GM10248 (cell line): ENCODE measurements at regions of chr12 and their contacts with region 1.

Region 1: GRCh38 chr12:26884765-26885576 is 52.0 kb upstream of the ITPR2 start:
- DNase-seq: peak; percentile 81
- CTCF ChIP-seq: peak; percentile 88

Region 2: GRCh38 chr12:26576266-26576665 is 308.7 kb before region 1 on chr12:
- CTCF ChIA-PET with region 1: no interaction called
- POLR2A ChIA-PET with region 1: no interaction called
- DNase-seq: no peak
- CTCF ChIP-seq: no peak

Region 3: GRCh38 chr12:26832822-26833742 is 51.9 kb before region 1 on chr12 and contains the start of gene ITPR2:
- CTCF ChIA-PET with region 1: interaction called, 42 read pairs
- POLR2A ChIA-PET with region 1: interaction called, 4 read pairs
- DNase-seq: peak; percentile 99
- CTCF ChIP-seq: peak; percentile 66

Region 4: DNA sequence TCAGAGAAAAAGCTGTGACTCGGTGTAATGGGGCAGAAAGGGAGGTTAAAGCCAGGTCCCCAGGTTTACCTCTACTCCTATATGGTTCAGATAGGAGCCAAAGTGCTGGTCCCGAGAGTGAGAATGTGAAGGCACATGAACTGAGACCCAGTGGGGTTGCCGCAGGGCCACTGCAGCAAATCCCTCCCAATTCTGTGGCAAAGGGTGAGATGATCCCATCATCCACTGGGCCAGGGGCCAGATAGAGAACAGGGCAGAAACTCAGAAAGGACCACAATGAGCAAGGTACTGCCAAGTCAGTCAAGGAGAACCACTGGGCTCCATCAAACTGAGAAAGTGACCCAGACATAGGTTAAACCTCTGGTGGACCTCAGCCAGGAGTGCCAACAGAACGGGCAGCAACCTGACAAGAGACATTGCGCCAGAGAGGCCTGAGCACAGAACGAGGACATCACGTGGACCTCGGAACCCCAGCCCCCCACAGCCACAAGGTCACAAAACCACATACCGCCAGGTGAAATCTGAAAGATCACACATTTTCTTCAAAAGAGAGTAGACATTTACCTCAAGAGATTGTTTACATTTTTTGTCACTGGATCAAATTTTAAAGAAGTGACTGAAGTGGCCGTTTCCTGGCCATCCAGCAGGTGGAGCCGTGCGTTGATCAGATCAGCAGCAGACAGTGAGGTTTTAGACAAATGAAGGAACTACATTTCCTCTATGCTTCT is 31.5 kb before region 1 on chr12:
- CTCF ChIA-PET with region 1: interaction called, 81 read pairs
- POLR2A ChIA-PET with region 1: no interaction called
- DNase-seq: peak; percentile 75
- CTCF ChIP-seq: peak; percentile 88

Region 5: GRCh38 chr12:26870491-26871419 is 14.2 kb before region 1 on chr12:
- CTCF ChIA-PET with region 1: interaction called, 71 read pairs
- POLR2A ChIA-PET with region 1: no interaction called
- DNase-seq: no peak
- CTCF ChIP-seq: no peak

Region 6: DNA sequence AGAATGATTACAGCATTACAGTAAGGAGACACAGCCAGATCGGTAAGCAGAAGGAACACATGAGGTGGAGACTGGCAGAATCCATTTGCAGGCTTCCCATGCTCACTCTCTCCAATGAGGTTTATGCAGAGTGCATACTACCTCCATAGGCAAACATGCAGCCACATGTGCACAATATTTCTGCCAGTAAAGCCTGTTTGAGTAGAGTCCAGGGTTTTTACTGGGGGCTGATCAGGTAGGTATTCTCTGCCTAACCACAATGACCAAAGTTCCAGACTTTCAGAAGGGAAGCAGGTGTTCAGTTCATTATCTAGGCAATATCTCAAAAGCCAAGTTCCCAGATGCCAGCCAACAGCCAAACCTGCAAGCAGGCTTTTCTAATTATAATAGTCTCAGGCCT is 21.7 kb after region 1 on chr12:
- CTCF ChIA-PET with region 1: interaction called, 13 read pairs
- POLR2A ChIA-PET with region 1: no interaction called
- DNase-seq: no peak
- CTCF ChIP-seq: no peak

Region 7: DNA sequence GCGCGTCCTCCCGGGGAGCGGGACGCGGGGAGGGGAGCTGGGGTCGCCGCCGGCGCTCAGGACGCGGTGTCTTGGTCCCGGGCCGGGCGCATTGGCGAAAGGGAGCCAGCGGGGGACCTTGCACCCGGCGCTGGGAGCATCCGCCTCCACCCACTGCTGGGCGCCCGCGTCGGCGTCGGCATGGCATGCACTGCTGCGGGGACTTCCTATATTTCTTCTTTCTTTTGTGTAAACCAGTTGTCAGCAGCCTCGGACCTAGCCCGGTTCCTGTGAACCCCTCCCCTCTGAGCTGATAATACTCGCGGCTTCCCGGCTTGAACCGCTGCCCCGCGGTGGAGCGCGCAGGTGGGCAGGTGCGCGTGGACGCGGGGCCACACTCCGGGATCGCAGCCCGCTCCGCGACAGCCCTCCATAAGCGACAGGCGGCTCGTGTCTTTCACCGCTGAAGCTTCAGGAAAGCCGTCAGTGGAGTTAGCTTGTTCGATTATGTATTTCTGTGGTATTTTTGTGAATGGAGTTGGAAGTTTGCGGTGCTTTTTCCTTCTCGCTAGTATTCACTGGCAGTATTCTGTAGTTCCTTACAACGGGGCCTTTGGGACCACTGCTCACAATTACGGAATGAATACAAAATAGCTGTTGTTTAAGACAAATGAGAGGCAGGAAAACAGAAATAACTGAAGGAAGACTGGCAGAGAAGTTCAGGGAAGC is 448.5 kb after region 1 on chr12:
- CTCF ChIA-PET with region 1: no interaction called
- POLR2A ChIA-PET with region 1: no interaction called
- DNase-seq: peak; percentile 45
- CTCF ChIP-seq: no peak